ENCODE measurements at regions of chr1 and their contacts with region 1.

Region 1: DNA sequence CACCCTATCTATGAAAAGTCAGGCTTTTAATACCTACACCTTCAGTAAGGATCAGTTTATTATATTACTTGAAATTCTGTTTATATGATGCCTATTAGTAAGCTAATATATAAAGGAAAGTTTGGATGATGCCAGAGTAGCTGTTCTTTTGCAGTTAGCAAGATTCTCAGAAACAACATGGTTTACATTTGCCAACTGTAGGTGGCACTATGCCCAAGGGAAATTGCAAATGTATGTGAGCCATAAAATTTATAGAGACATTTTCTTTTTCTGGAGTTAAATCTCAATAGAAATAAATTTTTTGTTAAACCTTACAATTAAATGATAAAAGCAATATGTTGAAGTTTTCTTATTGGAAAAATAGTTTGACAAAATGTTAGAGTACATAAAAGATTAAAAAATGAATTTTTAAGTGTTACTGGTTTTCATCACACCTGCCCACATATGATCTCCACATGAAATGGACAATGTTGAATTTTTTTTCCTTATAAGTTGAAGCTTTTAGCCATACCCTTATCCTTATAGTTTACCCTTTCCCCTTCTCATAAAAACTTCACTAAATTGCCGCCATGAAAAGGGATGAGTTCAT is 32.1 kb upstream of the EPHX4 start:
- DNase-seq: no peak
- H3K4me3 ChIP-seq: no peak overlapping the region
- H3K27ac ChIP-seq: no peak overlapping the region
- H3K4me1 ChIP-seq: no peaks in the 10 kb centered on the region
- H3K27me3 ChIP-seq: no peaks in the 10 kb centered on the region
- CTCF ChIP-seq: peak in 1 of 2 experiments; percentile 22

Region 2: DNA sequence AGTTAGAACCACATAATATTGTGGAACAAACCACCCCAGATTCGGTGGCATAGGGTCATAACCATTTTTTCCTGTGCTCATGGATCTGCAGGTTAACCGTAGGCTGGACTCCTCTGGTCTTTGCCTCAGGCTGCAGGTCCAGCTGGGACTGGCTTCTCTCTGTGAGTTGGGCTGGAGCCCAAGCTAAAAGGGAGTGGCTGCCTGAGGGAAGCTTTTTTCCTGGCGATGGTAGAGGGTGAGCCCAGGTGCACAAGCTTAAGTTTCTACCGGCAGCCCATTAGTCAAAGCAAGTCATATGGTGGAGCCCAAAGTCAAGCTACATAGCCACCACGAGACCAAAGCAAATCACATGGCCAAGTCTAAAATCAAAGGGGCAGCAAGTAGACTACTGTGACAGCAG is 45.9 kb after region 1 on chr1:
- intact Hi-C with region 1: loop called (anchors 2 kb)
- DNase-seq: no peak
- H3K4me3 ChIP-seq: no peak overlapping the region
- H3K27ac ChIP-seq: no peak overlapping the region
- H3K4me1 ChIP-seq: no peaks in the 10 kb centered on the region
- H3K27me3 ChIP-seq: no peaks in the 10 kb centered on the region
- CTCF ChIP-seq: no peak

Region 3: DNA sequence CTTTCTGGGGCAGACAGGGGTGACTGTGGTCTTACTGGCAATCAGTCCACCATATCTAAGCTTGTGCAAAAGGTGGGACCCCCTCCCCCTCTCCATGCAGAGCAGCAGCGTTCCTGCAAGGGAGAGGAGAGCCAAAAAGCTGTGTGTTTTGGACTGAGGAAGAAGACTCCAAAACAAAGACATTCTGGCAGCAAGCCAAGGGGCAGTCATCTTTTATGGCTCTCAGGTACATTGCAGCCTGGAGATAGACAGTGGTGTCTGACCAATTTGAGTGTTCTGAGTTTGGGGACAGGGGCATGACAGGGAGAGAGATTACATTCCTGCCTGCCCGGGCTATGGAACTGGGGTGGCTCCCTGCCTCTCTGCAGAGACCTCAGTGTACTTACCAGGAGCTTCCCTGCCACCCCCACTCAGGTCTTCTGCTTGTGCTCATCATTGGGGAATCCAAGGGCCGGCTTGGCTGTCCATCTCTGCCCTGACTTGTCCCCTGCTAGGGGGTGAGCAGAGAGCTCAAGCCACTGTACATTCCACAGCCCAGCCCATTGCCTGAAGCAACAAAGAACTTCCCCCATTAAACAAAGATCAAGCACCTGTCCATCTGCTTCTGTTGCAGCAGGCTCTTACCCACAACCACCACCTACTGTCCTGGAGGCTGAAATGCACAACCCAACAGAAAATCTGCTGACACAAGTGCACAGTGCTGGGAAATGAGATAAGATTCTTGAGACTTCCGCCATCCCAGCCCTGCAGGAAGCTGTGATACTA is 656.1 kb after region 1 on chr1:
- intact Hi-C with region 1: no loop called
- DNase-seq: no peak
- H3K4me3 ChIP-seq: no peak overlapping the region
- H3K27ac ChIP-seq: no peak overlapping the region
- H3K4me1 ChIP-seq: no peaks in the 10 kb centered on the region
- H3K27me3 ChIP-seq: no peaks in the 10 kb centered on the region
- CTCF ChIP-seq: no peak

Measured in tibial artery (tissue), 4 donors.